ENCODE measurements at regions of chr12 and their contacts with region 1.

Region 1: DNA sequence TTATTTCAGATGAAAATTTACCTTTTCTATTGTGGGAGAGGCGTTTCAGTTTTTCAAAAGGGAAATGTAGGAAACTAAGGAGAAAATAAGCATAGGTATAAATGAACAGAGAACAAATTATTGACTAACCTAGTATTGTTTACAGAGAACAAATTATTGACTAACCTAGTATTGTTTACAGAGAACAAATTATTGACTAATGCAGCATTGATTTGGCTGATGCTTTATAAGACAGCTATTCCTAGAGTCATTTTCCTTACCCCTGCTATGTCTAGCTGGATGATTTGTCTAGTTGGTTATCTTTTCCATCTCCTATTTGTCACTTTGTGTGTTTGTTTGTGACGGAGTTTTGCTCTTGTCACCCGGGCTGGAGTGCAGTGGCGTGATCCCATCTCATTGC is 22.6 kb downstream of the TMPO start:
- DNase-seq: no peak
- H3K4me3 ChIP-seq: no peak overlapping the region
- H3K27ac ChIP-seq: no peak overlapping the region
- H3K4me1 ChIP-seq: no peaks in the 10 kb centered on the region
- H3K27me3 ChIP-seq: no peaks in the 10 kb centered on the region
- CTCF ChIP-seq: no peak
- EP300 ChIP-seq: no peak
- POLR2A ChIP-seq: no peak
- RAD21 ChIP-seq: no peak

Region 2: GRCh38 chr12:98418357-98419075 is 119.5 kb before region 1 on chr12:
- CTCF ChIA-PET with region 1: interaction called, 11 read pairs
- POLR2A ChIA-PET with region 1: no interaction called
- DNase-seq: no peak
- H3K4me3 ChIP-seq: no peak overlapping the region
- H3K27ac ChIP-seq: no peak overlapping the region
- H3K4me1 ChIP-seq: peaks cover 0 to 4% (median 3%) of the 10 kb centered on the region in 4 experiments; a peak in 4 of 7 replicates
- H3K27me3 ChIP-seq: no peaks in the 10 kb centered on the region
- CTCF ChIP-seq: no peak
- EP300 ChIP-seq: no peak
- POLR2A ChIP-seq: no peak
- RAD21 ChIP-seq: no peak

Region 3: GRCh38 chr12:98587084-98587483 is 49.1 kb after region 1 on chr12:
- CTCF ChIA-PET with region 1: no interaction called
- POLR2A ChIA-PET with region 1: no interaction called
- DNase-seq: no peak
- H3K4me3 ChIP-seq: no peak overlapping the region
- H3K27ac ChIP-seq: no peak overlapping the region
- H3K4me1 ChIP-seq: no peaks in the 10 kb centered on the region
- H3K27me3 ChIP-seq: no peaks in the 10 kb centered on the region
- CTCF ChIP-seq: no peak
- EP300 ChIP-seq: no peak
- POLR2A ChIP-seq: no peak
- RAD21 ChIP-seq: no peak